Activated B cell treated with CpG ODN at 0.5 μM for 24 hours (primary cell): ENCODE measurements at regions of chr10 and their contacts with region 1.

Region 1: DNA sequence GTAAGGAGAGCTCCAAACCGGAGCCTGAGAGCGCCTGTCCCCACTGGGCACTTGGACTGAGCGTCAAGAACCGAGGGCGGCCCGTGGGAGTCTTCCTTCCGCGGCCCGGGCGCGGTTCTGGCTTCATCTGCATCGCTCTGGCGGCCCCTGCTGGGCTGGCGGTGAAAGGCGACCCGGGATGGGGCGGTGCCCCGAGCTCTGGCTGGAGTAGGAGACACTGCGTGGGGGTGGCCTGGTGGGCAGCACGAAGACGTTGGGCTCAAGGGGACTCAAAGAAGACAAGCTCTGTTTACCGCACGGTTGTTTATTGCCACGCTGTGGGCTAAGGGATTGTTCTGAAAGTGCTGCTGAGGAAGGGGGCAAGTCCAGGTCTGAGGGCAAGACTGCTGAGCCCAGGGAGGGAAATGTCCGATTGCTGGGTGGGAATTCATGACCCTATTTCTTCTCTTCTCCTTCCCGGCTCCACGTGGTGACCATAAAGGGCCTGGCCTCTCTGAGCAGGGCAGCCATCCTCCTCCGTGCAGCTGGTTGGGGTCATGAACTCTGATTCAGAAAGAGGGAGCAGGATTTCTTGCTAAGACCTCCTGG is 29.8 kb downstream of the PLAU start:
- DNase-seq: peak; percentile 84
- ATAC-seq: peak; percentile 100
- H3K4me3 Mint-ChIP-seq: peak overlapping the region; percentile 64
- H3K27ac Mint-ChIP-seq: peak overlapping the region; percentile 46
- H3K4me1 Mint-ChIP-seq: peaks cover 4% of the 10 kb centered on the region
- H3K27me3 Mint-ChIP-seq: peaks cover 2% of the 10 kb centered on the region
- CTCF ChIP-seq: no peak

Region 2: GRCh38 chr10:73529089-73529832 is 411.5 kb before region 1 on chr10:
- CTCF ChIA-PET with region 1: interaction called, 5 read pairs
- POLR2A ChIA-PET with region 1: no interaction called
- intact Hi-C with region 1: loop called (anchors 5 kb)
- DNase-seq: peak; percentile 20
- ATAC-seq: peak; percentile 86
- H3K4me3 Mint-ChIP-seq: no peak overlapping the region
- H3K27ac Mint-ChIP-seq: no peak overlapping the region
- H3K4me1 Mint-ChIP-seq: no peaks in the 10 kb centered on the region
- H3K27me3 Mint-ChIP-seq: no peaks in the 10 kb centered on the region
- CTCF ChIP-seq: peak; percentile 68

Region 3: DNA sequence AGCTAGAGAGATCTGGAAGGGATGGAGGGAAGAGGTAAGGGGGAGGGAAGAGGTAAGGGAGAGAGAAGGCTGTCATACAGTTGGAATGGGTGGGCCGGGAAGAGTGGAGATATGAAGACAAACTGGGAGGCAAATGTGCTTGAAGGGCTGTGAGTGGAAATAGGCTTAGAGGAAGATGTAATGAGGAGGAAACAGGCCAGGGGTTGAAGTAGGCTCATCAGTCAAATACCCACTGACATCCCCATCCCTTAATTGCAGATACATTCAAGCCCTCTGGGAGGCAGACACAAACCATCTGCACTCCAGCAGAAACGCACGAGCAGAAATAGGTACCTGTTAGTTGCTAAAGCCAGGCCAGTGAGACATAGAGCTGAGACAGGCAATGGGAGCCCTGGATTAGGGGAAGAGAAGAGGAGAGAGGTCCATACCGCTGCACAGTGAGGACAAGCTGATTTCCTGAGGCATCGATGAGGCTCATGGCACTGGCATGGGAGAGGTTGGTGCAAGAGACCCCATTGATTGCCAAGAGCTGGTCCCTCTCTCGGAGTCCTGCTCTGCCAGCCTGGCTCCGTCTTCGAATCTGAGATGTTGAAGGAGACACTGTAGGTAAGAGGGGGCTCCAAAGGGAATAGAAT is 286.9 kb before region 1 on chr10:
- CTCF ChIA-PET with region 1: no interaction called
- POLR2A ChIA-PET with region 1: no interaction called
- intact Hi-C with region 1: no loop called
- DNase-seq: no peak
- ATAC-seq: no peak
- H3K4me3 Mint-ChIP-seq: no peak overlapping the region
- H3K27ac Mint-ChIP-seq: no peak overlapping the region
- H3K4me1 Mint-ChIP-seq: peaks cover 8% of the 10 kb centered on the region
- H3K27me3 Mint-ChIP-seq: no peaks in the 10 kb centered on the region
- CTCF ChIP-seq: no peak

Region 4: DNA sequence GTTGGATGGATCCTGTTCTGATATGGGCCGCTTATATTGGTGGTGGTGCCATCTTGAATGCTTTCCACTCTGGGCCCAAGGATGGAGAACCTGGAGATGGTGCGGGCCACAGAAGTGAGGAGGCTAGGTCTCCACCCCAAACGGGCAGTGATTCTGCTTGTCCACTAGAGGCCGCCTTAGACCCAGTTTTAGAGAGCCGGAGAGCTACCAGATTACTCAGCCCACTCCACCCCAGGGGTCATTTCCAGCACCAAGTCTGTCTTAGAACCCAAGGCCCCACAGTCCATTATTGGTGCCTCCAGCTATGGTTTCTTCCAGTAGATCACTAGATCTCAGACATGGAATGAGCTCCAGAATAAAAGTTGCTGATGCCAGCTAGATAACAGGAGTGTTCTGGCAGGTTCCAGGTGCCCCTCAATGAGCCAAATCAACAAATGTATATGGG is 54.6 kb before region 1 on chr10:
- CTCF ChIA-PET with region 1: interaction called, 181 read pairs
- POLR2A ChIA-PET with region 1: interaction called, 4 read pairs
- intact Hi-C with region 1: loop called (anchors 1 kb)
- DNase-seq: peak; percentile 52
- ATAC-seq: peak; percentile 97
- H3K4me3 Mint-ChIP-seq: no peak overlapping the region
- H3K27ac Mint-ChIP-seq: no peak overlapping the region
- H3K4me1 Mint-ChIP-seq: peaks cover 11% of the 10 kb centered on the region
- H3K27me3 Mint-ChIP-seq: no peaks in the 10 kb centered on the region
- CTCF ChIP-seq: no peak

Region 5: GRCh38 chr10:74058658-74059057 is 117.9 kb after region 1 on chr10:
- CTCF ChIA-PET with region 1: interaction called, 5 read pairs
- POLR2A ChIA-PET with region 1: no interaction called
- intact Hi-C with region 1: loop called (anchors 5 kb)
- DNase-seq: no peak
- ATAC-seq: peak; percentile 73
- H3K4me3 Mint-ChIP-seq: no peak overlapping the region
- H3K27ac Mint-ChIP-seq: no peak overlapping the region
- H3K4me1 Mint-ChIP-seq: peaks cover 24% of the 10 kb centered on the region
- H3K27me3 Mint-ChIP-seq: no peaks in the 10 kb centered on the region
- CTCF ChIP-seq: no peak

Region 6: DNA sequence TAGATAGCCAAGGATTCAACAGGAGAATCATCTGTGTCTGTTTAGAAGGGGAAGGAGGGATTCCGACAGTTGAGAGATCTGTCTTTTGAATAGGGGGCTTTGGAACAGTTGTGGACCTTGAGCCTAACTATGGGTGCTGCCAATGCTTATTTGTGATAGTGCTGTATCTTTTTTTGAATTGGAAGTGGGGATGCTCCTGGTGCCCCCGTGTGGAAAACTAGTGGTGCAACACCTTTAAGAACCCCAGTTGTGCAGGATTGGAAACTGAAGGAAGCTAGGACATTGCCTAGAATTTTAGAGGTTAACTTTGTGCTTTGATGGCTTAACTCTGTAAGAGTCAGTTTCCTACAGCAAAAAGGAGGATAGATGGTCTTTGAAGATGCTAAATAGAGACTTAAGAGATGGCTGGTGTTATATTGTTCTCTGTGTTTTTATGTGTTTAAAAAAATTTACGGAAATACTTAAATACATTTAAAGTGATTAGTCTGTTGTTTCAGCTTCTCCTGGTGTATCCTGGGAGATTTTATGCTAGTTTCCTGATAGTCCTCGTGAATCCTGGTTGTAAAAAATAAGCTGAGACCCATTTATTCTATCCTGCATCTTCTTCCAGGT is 140.6 kb after region 1 on chr10:
- CTCF ChIA-PET with region 1: interaction called, 35 read pairs
- POLR2A ChIA-PET with region 1: no interaction called
- intact Hi-C with region 1: no loop called
- DNase-seq: no peak
- ATAC-seq: peak; percentile 51
- H3K4me3 Mint-ChIP-seq: no peak overlapping the region
- H3K27ac Mint-ChIP-seq: no peak overlapping the region
- H3K4me1 Mint-ChIP-seq: peaks cover 44% of the 10 kb centered on the region
- H3K27me3 Mint-ChIP-seq: no peaks in the 10 kb centered on the region
- CTCF ChIP-seq: no peak

Region 7: GRCh38 chr10:75319274-75319673 is 1378.5 kb after region 1 on chr10:
- CTCF ChIA-PET with region 1: no interaction called
- POLR2A ChIA-PET with region 1: no interaction called
- intact Hi-C with region 1: no loop called
- DNase-seq: no peak
- ATAC-seq: no peak
- H3K4me3 Mint-ChIP-seq: no peak overlapping the region
- H3K27ac Mint-ChIP-seq: no peak overlapping the region
- H3K4me1 Mint-ChIP-seq: no peaks in the 10 kb centered on the region
- H3K27me3 Mint-ChIP-seq: peaks cover 2% of the 10 kb centered on the region
- CTCF ChIP-seq: no peak